Heart left ventricle (tissue), 16 donors: ENCODE measurements at regions of chr5 and their contacts with region 1.

Region 1: DNA sequence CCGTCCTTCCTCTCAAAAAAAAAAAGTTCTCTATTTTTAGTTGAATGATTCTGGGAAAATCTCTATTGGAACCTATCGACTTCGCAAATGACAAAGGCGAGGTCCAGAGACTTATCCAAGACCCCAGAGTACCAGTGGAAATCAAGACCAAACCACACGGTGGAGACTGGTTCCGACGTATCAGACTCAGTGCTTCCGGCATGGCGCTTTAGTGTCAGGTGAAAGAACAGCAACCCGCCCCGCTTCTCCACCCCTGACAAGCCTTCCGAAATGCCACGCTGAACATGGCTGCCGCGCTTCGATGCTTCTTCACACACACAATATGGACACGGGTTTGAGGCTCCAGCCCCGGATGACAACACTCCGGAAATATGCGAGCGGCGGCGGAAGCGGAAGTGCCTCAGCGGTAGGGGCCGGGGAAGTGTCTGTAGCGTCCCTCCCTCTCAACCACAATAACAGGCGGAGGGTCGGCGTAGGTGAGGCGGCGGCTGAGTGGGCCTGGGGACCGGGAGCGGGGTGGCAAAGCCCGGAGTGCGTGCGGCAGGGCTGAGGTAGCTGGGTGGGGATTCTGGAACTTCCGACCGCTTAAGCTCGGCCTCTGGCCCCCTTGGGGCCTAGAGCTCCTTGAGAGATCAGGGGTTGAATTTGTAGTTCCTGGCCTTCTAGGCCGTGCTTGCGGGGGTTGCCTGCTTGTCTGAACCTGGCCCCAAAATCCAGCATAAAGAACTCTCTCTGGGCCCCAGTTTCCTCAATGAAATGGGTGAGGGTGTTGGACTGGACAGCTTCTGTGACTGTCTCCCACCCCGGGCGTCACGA is at the start of gene FBXO38:
- DNase-seq: peak; percentile 97
- ATAC-seq: peak; percentile 98 to 99 (median 99)
- H3K4me3 ChIP-seq: peak within 1 kb of the TSS; percentile 66 to 94 (median 82)
- H3K27ac ChIP-seq: peak within 1 kb of the TSS; percentile 60 to 96 (median 91)
- H3K4me1 ChIP-seq: peaks cover 3 to 82% (median 55%) of the 10 kb centered on the region in 12 donors
- H3K27me3 ChIP-seq: no peaks in the 10 kb centered on the region
- CTCF ChIP-seq: peak in 4 of 12 donors; percentile 5 to 20 (median 16)
- POLR2A ChIP-seq: peak in 1 of 2 donors; percentile 78
- total RNA-seq, gene FBXO38: 29.1 to 56.0 (median 48.2) TPM

Region 2: GRCh38 chr5:148290271-148291195 is 93.2 kb before region 1 on chr5:
- intact Hi-C with region 1: loop called in 2 of 10 experiments (anchors 5 kb)
- DNase-seq: no peak
- ATAC-seq: peak; percentile 55 to 65 (median 61)
- H3K4me3 ChIP-seq: no peak overlapping the region
- H3K27ac ChIP-seq: no peak overlapping the region
- H3K4me1 ChIP-seq: peaks cover 0 to 3% (median 0%) of the 10 kb centered on the region in 12 donors
- H3K27me3 ChIP-seq: no peaks in the 10 kb centered on the region
- CTCF ChIP-seq: peak; percentile 17 to 60 (median 45)
- POLR2A ChIP-seq: no peak

Region 3: DNA sequence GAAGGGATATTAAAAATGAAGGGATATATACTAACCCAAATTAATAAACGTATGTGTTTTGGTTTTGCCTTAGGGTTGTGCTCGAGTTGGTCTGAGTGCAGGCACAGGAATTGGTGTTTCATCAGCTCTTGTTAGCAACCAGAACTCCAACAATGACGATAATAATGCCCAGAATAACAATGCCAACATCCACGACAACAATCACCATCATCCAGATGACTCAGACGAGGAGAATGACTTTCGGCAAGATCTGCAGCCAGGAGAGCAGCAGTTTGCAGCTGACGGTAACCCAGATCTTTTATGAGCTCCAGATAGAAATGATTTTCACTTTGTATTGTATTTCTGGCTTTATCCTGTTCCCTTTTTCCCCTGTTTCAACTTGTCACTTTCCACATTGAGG is 33.1 kb after region 1 on chr5:
- intact Hi-C with region 1: loop called in 2 of 10 experiments (anchors 1 to 5 kb)
- DNase-seq: peak in 3 of 5 donors; percentile 17 to 42 (median 21)
- ATAC-seq: peak; percentile 53 to 82 (median 76)
- H3K4me3 ChIP-seq: no peak overlapping the region
- H3K27ac ChIP-seq: peak overlapping the region; percentile 0 to 79 (median 72)
- H3K4me1 ChIP-seq: peaks cover 0 to 33% (median 7%) of the 10 kb centered on the region in 12 donors
- H3K27me3 ChIP-seq: no peaks in the 10 kb centered on the region
- CTCF ChIP-seq: no peak
- POLR2A ChIP-seq: no peak

Region 4: GRCh38 chr5:148457183-148457620 is 73.4 kb after region 1 on chr5:
- intact Hi-C with region 1: no loop called
- DNase-seq: no peak
- ATAC-seq: no peak
- H3K4me3 ChIP-seq: no peak overlapping the region
- H3K27ac ChIP-seq: no peak overlapping the region
- H3K4me1 ChIP-seq: peaks cover 0 to 34% (median 14%) of the 10 kb centered on the region in 12 donors
- H3K27me3 ChIP-seq: no peaks in the 10 kb centered on the region
- CTCF ChIP-seq: peak in 10 of 12 donors; percentile 19 to 51 (median 30)
- POLR2A ChIP-seq: no peak